Heart right ventricle (tissue), 16 donors: ENCODE measurements at regions of chr10 and their contacts with region 1.

Region 1: DNA sequence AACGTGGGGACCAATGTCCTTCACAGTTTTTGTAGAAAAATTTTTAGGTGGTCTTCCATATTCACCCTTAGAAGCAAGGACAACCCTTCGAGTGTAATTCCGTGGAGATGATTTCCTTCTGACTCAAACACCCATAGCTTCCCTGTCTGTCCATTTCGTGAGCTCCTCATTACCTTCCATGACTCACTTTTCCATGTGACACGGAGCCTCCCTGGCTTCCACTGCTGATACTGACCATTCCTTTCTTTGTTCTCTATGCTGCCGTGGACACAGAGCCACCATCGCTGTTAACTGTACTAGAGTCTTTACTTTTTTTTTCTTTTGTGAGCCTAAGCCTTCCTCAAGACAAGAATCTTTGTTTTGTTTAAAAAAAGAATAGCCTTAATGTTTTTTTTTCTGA is 12.5 kb upstream of the ARMS2 start:
- DNase-seq: no peak
- ATAC-seq: no peak
- H3K4me3 ChIP-seq: no peak overlapping the region
- H3K27ac ChIP-seq: no peak overlapping the region
- H3K4me1 ChIP-seq: peaks cover 0 to 12% (median 4%) of the 10 kb centered on the region in 9 donors
- H3K27me3 ChIP-seq: no peaks in the 10 kb centered on the region
- CTCF ChIP-seq: no peak

Region 2: DNA sequence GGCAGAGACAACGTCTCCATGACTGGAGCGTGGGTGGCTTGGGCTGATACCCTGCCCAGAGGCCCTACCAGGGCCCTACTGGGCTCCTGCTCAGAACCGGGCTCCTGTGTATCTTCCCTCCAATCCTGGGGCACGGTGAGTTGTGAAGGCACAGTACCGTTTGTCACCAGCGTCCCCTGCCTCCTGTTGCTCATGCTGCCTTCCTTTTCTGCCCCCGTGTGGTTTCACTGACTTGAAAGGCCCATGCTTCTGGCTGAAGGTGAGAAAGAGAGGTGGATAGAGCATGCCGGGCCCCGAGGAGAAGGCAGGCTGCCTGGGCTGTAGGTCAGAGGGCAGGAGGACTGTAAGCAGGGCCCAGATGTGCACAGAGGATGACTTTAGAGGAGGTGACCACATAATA is 109.5 kb after region 1 on chr10:
- intact Hi-C with region 1: loop called in 1 of 10 experiments (anchors 5 kb)
- DNase-seq: peak; percentile 16 to 44
- ATAC-seq: peak; percentile 34 to 86 (median 68)
- H3K4me3 ChIP-seq: no peak overlapping the region
- H3K27ac ChIP-seq: no peak overlapping the region
- H3K4me1 ChIP-seq: peaks cover 0 to 6% (median 0%) of the 10 kb centered on the region in 9 donors
- H3K27me3 ChIP-seq: peaks cover 0 to 6% (median 0%) of the 10 kb centered on the region in 7 donors
- CTCF ChIP-seq: peak in 7 of 9 donors; percentile 19 to 53 (median 33)